A549 (cell line): ENCODE measurements at regions of chr16 and their contacts with region 1.

Region 1: DNA sequence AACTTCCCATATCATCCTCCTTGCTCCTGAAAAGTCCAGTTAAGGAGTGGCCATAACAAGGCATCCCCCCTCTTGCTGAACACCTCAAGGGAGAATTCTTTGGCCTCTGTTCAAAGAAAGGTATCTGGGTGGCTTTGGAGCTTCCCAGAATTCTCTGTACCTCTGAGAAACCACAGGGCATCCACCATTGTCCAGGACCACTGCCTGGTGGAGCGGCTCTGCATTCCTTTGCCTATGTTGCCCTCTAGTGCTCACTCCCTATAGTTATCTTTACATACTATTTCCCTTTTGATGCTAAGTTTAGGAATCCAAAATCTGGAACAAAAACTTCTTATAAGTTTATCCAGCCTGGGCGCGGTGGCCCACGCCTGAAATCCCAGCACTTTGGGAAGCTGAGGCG is 30.3 kb downstream of the CHD9NB start:
- DNase-seq: peak; percentile 55 to 69
- ATAC-seq: peak; percentile 98
- H3K4me3 ChIP-seq: no peak overlapping the region
- H3K27ac ChIP-seq: no peak overlapping the region
- H3K4me1 ChIP-seq: no peaks in the 10 kb centered on the region
- CTCF ChIP-seq: peak; percentile 75
- EP300 ChIP-seq: no peak
- POLR2A ChIP-seq: no peak
- RAD21 ChIP-seq: peak; percentile 86 to 92

Region 2: GRCh38 chr16:52068447-52069074 is 953.8 kb before region 1 on chr16:
- CTCF ChIA-PET with region 1: interaction called, 28 read pairs
- POLR2A ChIA-PET with region 1: no interaction called
- DNase-seq: peak in 1 of 2 experiments; percentile 39
- ATAC-seq: peak; percentile 34 to 51; a peak in 2 of 6 replicates
- H3K4me3 ChIP-seq: no peak overlapping the region
- H3K27ac ChIP-seq: no peak overlapping the region
- H3K4me1 ChIP-seq: no peaks in the 10 kb centered on the region
- CTCF ChIP-seq: no peak; the same call in 2 of the 3 replicates
- EP300 ChIP-seq: no peak
- POLR2A ChIP-seq: no peak
- RAD21 ChIP-seq: peak; percentile 32 to 55; a peak in 3 of 5 replicates

Region 3: GRCh38 chr16:53007095-53007494 is 15.3 kb before region 1 on chr16:
- CTCF ChIA-PET with region 1: interaction called, 26 read pairs
- POLR2A ChIA-PET with region 1: no interaction called
- DNase-seq: no peak
- ATAC-seq: 0 out of 6 replicates have a peak, but pooled peaks of 1 of the 2 experiments have one; percentile 24
- H3K4me3 ChIP-seq: no peak overlapping the region
- H3K27ac ChIP-seq: no peak overlapping the region
- H3K4me1 ChIP-seq: no peaks in the 10 kb centered on the region
- CTCF ChIP-seq: no peak
- EP300 ChIP-seq: no peak
- POLR2A ChIP-seq: no peak
- RAD21 ChIP-seq: no peak